ENCODE measurements at regions of chr3 and their contacts with region 1.

Region 1: GRCh38 chr3:151227807-151228665 is 25.0 kb upstream of the GPR171 start:
- DNase-seq: peak; percentile 58
- ATAC-seq: peak; percentile 86
- H3K4me3 Mint-ChIP-seq: no peak overlapping the region
- H3K27ac Mint-ChIP-seq: peak overlapping the region; percentile 65
- H3K4me1 Mint-ChIP-seq: peaks cover 44% of the 10 kb centered on the region
- H3K27me3 Mint-ChIP-seq: no peaks in the 10 kb centered on the region
- CTCF ChIP-seq: peak; percentile 94

Region 2: GRCh38 chr3:150528354-150528797 is 699.7 kb before region 1 on chr3:
- CTCF ChIA-PET with region 1: no interaction called
- POLR2A ChIA-PET with region 1: no interaction called
- intact Hi-C with region 1: loop called (anchors 1 kb)
- DNase-seq: no peak
- ATAC-seq: no peak
- H3K4me3 Mint-ChIP-seq: no peak overlapping the region
- H3K27ac Mint-ChIP-seq: no peak overlapping the region
- H3K4me1 Mint-ChIP-seq: no peaks in the 10 kb centered on the region
- H3K27me3 Mint-ChIP-seq: no peaks in the 10 kb centered on the region
- CTCF ChIP-seq: no peak

Region 3: DNA sequence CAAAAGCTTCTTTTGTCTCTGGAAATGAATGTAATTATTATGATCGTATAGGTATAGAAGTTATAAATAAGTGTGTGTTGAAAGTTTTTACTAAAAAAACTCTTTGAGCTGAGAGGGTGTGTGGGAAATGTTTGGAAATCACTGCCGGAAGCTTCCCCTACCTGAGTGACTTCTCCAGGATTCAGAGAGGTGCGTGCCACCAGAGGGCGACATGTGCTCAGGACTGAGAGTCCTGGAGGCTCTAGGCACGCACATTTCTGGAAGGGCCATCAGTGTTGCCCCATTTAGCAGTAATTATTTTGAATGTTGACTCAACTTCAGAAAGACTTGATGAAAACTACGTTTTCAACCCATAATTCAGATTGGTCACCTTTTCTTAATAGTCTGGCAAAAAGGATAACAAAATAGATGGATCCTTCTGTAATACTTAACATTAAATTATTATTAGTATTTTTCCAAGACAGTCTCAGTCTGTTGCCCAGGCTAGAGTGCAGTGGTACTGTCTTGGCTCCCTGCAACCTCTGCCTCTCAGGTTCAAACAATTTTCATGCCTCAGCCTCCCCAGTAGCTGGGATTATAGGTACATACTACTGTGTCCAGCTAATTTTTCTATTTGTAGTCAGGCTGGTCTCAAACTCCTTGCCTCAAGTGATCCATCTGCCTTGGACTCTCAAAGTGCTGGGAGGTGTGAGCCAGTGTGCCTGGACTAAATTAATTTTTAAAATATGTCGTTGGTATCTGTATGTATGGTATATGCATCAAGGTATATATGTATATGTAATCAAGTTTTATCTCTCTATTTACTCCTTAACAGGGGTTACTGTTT is 59.6 kb before region 1 on chr3:
- CTCF ChIA-PET with region 1: interaction called, 63 read pairs
- POLR2A ChIA-PET with region 1: interaction called, 3 read pairs
- intact Hi-C with region 1: loop called (anchors 1 kb)
- DNase-seq: peak; percentile 54
- ATAC-seq: no peak
- H3K4me3 Mint-ChIP-seq: no peak overlapping the region
- H3K27ac Mint-ChIP-seq: no peak overlapping the region
- H3K4me1 Mint-ChIP-seq: peaks cover 43% of the 10 kb centered on the region
- H3K27me3 Mint-ChIP-seq: no peaks in the 10 kb centered on the region
- CTCF ChIP-seq: peak; percentile 65

Region 4: GRCh38 chr3:151265866-151266265 is 37.8 kb after region 1 on chr3:
- CTCF ChIA-PET with region 1: interaction called, 17 read pairs
- POLR2A ChIA-PET with region 1: interaction called, 4 read pairs
- intact Hi-C with region 1: loop called (anchors 1 kb)
- DNase-seq: peak; percentile 44
- ATAC-seq: peak; percentile 87
- H3K4me3 Mint-ChIP-seq: peak overlapping the region; percentile 60
- H3K27ac Mint-ChIP-seq: peak overlapping the region; percentile 98
- H3K4me1 Mint-ChIP-seq: peaks cover 66% of the 10 kb centered on the region
- H3K27me3 Mint-ChIP-seq: no peaks in the 10 kb centered on the region
- CTCF ChIP-seq: no peak

Region 5: DNA sequence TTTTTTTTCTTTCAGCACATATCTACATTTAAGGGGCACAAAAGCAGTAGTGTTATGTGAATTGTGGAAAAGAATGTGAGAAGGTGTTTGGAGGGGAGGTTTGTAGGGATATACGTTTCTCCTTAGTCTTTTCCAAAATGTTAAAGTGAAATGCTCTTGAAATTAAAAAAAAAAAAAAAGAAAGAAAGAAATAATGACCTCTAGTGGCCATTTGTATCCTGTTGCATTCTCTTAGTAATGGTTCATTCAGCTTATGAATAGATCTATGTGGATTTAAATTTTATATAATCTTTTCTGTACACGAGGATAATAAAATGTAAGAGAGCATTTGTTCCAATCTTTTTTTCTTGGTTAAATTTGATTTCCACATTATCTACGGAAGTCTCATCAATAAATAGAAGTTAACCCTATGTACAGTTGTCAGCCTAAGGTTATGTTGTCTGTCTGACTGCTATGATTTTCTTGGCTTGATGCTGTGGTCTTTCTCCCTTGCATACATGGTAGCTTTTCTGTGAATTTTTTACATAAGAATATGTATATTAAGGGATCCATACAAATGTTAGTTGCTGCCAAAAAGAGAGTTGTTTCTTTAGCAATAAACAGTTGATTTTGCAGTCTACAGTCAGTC is 99.6 kb after region 1 on chr3:
- CTCF ChIA-PET with region 1: no interaction called
- POLR2A ChIA-PET with region 1: no interaction called
- intact Hi-C with region 1: loop called (anchors 1 kb)
- DNase-seq: no peak
- ATAC-seq: peak; percentile 30
- H3K4me3 Mint-ChIP-seq: peak overlapping the region; percentile 82
- H3K27ac Mint-ChIP-seq: peak overlapping the region; percentile 90
- H3K4me1 Mint-ChIP-seq: peaks cover 33% of the 10 kb centered on the region
- H3K27me3 Mint-ChIP-seq: no peaks in the 10 kb centered on the region
- CTCF ChIP-seq: no peak

Region 6: GRCh38 chr3:151660885-151661284 is 432.8 kb after region 1 on chr3:
- CTCF ChIA-PET with region 1: no interaction called
- POLR2A ChIA-PET with region 1: no interaction called
- intact Hi-C with region 1: loop called (anchors 5 kb)
- DNase-seq: no peak
- ATAC-seq: no peak
- H3K4me3 Mint-ChIP-seq: no peak overlapping the region
- H3K27ac Mint-ChIP-seq: no peak overlapping the region
- H3K4me1 Mint-ChIP-seq: no peaks in the 10 kb centered on the region
- H3K27me3 Mint-ChIP-seq: no peaks in the 10 kb centered on the region
- CTCF ChIP-seq: no peak